Dendritic cell treated with granulocyte-macrophage colony-stimulating factor and Interleukin-4, amounts not matched to agents 40 ng/mL and 50 ng/mL, for 4 days (primary cell): ENCODE measurements at regions of chr11 and their contacts with region 1.

Region 1: DNA sequence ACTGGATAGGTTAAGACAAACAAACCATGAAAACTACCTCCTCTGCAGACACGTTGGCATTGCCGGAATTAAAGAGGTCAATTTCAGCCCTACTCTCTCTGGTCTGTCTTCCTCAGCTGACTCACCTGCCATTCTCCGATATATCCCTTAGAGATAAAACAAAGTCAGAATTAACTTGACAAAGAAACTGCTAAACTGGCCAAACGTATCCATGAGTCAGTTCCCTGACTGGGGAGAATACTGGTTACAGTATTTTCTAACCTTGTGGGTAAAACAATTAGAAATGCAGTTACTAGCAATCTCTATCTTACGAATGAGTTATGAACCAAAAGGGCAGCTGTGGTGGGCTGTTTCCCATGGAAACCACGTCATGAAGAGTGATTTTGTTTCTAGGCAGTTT is 96.2 kb downstream of the RDX start:
- H3K4me3 Mint-ChIP-seq: no peak overlapping the region
- H3K27ac Mint-ChIP-seq: no peak overlapping the region
- H3K4me1 Mint-ChIP-seq: no peaks in the 10 kb centered on the region
- H3K27me3 Mint-ChIP-seq: peaks cover 1% of the 10 kb centered on the region

Region 2: DNA sequence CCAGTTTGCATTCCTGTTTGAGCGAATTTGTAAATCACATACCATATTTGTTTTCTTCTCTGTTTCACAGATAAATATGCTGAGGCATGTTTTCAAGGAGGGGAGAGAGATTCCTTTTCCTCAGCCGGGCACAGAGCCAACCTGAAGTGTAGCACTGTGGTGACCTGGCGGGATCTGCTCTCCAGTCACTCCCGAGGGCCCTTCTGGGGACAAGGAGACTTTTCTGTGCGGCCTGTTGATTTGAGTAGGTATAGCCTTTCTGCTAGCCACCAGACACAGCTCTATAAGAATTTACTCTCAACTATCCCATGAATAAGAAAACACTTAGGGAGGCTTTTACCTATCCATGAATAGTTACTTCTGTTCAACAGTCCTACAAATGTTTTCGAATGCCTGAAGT is 166.1 kb after region 1 on chr11:
- intact Hi-C with region 1: loop called (anchors 2 kb)
- H3K4me3 Mint-ChIP-seq: no peak overlapping the region
- H3K27ac Mint-ChIP-seq: no peak overlapping the region
- H3K4me1 Mint-ChIP-seq: no peaks in the 10 kb centered on the region
- H3K27me3 Mint-ChIP-seq: no peaks in the 10 kb centered on the region